Heart left ventricle (tissue), 16 donors: ENCODE measurements at regions of chr12 and their contacts with region 1.

Region 1: DNA sequence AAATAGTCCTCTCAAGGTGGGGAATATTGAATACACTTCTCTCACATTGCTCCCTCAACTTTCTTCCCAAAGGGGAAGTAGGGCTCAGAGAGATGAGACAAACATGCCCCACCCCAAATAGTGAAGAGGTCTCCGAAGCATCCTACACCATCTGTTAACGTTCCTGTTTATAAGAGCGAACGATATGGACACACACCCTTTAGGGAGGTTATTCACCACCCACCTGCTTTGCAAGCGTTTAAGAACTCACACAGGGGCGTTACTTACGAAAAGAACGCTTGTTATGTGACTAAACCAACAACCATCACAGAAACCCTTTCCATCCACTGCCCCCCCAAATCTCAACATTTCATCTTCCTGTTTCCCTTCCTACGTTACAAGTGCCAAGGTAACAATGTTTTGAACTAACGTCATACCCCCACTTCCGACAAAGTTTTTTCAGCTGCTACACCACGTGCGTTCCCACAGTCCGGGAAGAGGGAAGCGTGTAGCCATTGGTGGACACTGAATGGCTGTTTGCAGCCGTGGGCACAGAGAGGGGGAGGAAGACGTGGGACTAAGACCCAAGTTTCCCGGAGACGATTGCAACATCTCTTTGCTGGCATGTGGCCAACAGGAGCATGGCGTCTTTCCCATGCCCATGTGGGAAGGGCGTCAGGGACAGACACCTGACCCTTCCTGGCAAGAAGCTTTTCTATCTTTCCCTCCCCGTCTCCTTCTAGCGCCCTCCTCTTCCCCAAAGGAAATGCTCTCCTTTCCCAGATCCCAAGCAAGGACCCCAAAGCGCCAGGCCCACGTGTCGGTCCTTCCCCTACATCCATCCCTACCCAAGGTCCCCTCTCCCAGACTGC is 1.2 kb downstream of the YBX3 start:
- DNase-seq: peak; percentile 88 to 96 (median 90)
- ATAC-seq: peak; percentile 88 to 94 (median 92)
- H3K4me3 ChIP-seq: peak overlapping the region; percentile 77 to 100 (median 92)
- H3K27ac ChIP-seq: peak overlapping the region; percentile 92 to 100 (median 98)
- H3K4me1 ChIP-seq: peaks cover 13 to 60% (median 51%) of the 10 kb centered on the region in 12 donors
- H3K27me3 ChIP-seq: peaks cover 0 to 5% (median 0%) of the 10 kb centered on the region in 9 donors
- CTCF ChIP-seq: no peak
- POLR2A ChIP-seq: peak in 1 of 2 donors; percentile 30

Region 2: DNA sequence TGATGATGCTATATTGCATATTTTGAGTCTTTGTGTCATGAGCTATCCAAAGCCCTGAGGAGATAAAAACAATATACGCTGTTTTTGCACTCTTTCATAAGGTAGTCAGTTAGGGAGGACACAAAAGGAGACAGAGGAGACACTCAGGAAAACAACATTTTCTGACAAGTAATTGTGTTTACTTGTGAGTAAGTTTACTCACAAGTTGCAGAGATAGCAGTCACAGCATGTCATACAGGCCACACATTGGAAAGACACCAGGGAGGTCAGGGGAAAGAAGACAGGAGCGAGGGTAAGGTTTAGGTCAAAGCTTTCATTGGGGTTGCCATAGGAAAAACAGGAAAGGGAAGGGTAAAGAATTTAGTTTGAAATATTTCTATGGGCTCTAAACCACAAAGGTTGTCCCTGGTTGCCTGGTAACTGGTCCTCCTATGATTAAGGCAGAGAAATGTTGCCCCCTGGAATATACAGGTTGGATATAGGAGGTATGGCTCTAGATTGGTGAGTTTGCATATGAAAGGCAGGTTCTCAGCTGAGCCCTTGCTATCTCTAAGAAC is 516.5 kb before region 1 on chr12:
- intact Hi-C with region 1: loop called in 7 of 10 experiments (anchors 5 to 10 kb)
- DNase-seq: no peak
- ATAC-seq: no peak
- H3K4me3 ChIP-seq: no peak overlapping the region
- H3K27ac ChIP-seq: no peak overlapping the region
- H3K4me1 ChIP-seq: no peaks in the 10 kb centered on the region
- H3K27me3 ChIP-seq: no peaks in the 10 kb centered on the region
- CTCF ChIP-seq: no peak
- POLR2A ChIP-seq: no peak

Region 3: DNA sequence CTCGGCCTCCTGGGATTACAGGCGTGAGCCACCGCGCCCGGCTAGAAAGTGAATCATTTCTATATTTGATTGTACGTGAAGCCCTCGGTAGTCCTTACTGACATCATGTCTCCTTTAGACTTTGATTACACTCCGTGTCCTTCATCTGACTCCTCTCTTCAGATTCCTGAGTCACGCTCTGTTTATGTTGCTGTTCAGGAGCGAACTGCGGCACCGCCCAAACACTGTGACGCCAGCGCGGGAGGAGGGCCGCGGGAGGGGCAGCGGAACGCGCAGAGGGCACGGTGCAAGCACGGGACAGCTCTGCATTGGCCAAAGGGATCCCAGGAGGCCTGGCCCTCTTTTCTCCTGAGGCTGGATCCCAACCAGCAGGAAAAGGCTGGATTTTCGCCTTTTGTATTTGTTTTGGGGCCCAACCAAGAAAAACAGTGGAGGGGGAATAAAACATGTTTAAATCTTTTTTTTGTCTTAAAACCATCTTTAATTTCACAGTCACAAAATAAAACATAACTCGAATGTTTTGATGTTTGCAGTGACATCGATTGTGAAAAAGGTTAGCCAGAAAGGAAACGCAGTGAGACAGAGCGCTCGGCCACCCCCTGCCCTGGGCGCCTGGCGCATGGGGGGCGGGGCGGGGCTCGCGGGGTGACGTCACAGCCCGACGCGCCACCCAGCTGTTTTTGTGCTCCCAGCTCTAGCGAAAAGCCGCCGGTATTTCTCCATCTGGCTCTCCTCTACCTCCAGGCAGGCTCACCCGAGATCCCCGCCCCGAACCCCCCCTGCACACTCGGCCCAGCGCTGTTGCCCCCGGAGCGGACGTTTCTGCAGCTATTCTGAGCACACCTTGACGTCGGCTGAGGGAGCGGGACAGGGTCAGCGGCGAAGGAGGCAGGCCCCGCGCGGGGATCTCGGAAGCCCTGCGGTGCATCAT is 509.4 kb before region 1 on chr12 and contains the start of gene GABARAPL1:
- intact Hi-C with region 1: loop called in 8 of 10 experiments (anchors 2 to 10 kb)
- DNase-seq: peak; percentile 97 to 99 (median 98)
- ATAC-seq: peak; percentile 92 to 96 (median 93)
- H3K4me3 ChIP-seq: peak within 1 kb of the TSS; percentile 65 to 89 (median 80)
- H3K27ac ChIP-seq: peak within 1 kb of the TSS; percentile 95 to 100 (median 98)
- H3K4me1 ChIP-seq: peaks cover 3 to 36% (median 19%) of the 10 kb centered on the region in 12 donors
- H3K27me3 ChIP-seq: no peaks in the 10 kb centered on the region
- CTCF ChIP-seq: peak in 2 of 12 donors; percentile 7 to 12
- POLR2A ChIP-seq: peak; percentile 39 to 72
- total RNA-seq, gene GABARAPL1: 212 to 790 (median 297) TPM

Region 4: GRCh38 chr12:10364815-10365622 is 356.9 kb before region 1 on chr12:
- intact Hi-C with region 1: loop called in 1 of 10 experiments (anchors 10 kb)
- DNase-seq: peak in 4 of 5 donors; percentile 58 to 73 (median 68)
- ATAC-seq: peak; percentile 82 to 91 (median 87)
- H3K4me3 ChIP-seq: peak overlapping the region; percentile 57 to 92 (median 66)
- H3K27ac ChIP-seq: peak overlapping the region; percentile 79 to 97 (median 91)
- H3K4me1 ChIP-seq: peaks cover 0 to 64% (median 14%) of the 10 kb centered on the region in 12 donors
- H3K27me3 ChIP-seq: no peaks in the 10 kb centered on the region
- CTCF ChIP-seq: no peak
- POLR2A ChIP-seq: no peak

Region 5: GRCh38 chr12:10613349-10614055 is 108.4 kb before region 1 on chr12 and contains the start of gene MAGOHB:
- intact Hi-C with region 1: loop called in 6 of 10 experiments (anchors 2 to 10 kb)
- DNase-seq: peak; percentile 96 to 97 (median 96)
- ATAC-seq: peak; percentile 99 to 100 (median 100)
- H3K4me3 ChIP-seq: peak within 1 kb of the TSS; percentile 63 to 91 (median 79)
- H3K27ac ChIP-seq: peak within 1 kb of the TSS; percentile 41 to 91 (median 87)
- H3K4me1 ChIP-seq: peaks cover 0 to 21% (median 9%) of the 10 kb centered on the region in 12 donors
- H3K27me3 ChIP-seq: peaks cover 0 to 6% (median 0%) of the 10 kb centered on the region in 9 donors
- CTCF ChIP-seq: peak in 1 of 12 donors; percentile 7
- POLR2A ChIP-seq: peak in 1 of 2 donors; percentile 75
- total RNA-seq, gene MAGOHB: 1.8 to 18.1 (median 12.7) TPM

Region 6: DNA sequence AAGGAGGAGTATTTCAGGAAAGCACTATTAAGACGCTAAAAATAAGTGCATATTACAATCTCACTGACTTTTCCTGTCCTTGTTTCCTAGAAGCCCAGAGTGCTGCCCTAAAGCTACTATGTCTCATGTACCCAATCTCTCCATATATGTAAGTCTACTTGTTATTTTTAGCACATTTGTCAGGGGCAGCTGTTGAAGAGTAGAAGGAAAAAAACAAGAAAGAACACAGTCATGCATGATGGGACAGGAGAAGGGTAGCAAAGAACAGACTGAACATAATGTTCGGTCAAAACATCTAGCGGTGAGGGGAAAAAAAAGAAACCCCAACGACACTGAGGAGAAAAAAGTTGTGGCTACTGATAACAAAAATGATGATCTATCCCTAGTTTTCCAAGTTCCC is 13.0 kb before region 1 on chr12:
- intact Hi-C with region 1: loop called in 1 of 10 experiments (anchors 1 kb)
- DNase-seq: no peak
- ATAC-seq: peak; percentile 88 to 92 (median 90)
- H3K4me3 ChIP-seq: no peak overlapping the region
- H3K27ac ChIP-seq: peak overlapping the region; percentile 17 to 85 (median 69)
- H3K4me1 ChIP-seq: peaks cover 0 to 54% (median 24%) of the 10 kb centered on the region in 12 donors
- H3K27me3 ChIP-seq: no peaks in the 10 kb centered on the region
- CTCF ChIP-seq: no peak
- POLR2A ChIP-seq: no peak

Region 7: GRCh38 chr12:12456637-12457036 is 1734.8 kb after region 1 on chr12:
- intact Hi-C with region 1: no loop called
- DNase-seq: no peak
- ATAC-seq: peak; percentile 26 to 53 (median 48)
- H3K4me3 ChIP-seq: no peak overlapping the region
- H3K27ac ChIP-seq: peak overlapping the region in 1 of 12 donors; percentile 72
- H3K4me1 ChIP-seq: peaks cover 0 to 11% (median 0%) of the 10 kb centered on the region in 12 donors
- H3K27me3 ChIP-seq: no peaks in the 10 kb centered on the region
- CTCF ChIP-seq: no peak
- POLR2A ChIP-seq: no peak